ENCODE measurements at regions of chr15 and their contacts with region 1.

Region 1: DNA sequence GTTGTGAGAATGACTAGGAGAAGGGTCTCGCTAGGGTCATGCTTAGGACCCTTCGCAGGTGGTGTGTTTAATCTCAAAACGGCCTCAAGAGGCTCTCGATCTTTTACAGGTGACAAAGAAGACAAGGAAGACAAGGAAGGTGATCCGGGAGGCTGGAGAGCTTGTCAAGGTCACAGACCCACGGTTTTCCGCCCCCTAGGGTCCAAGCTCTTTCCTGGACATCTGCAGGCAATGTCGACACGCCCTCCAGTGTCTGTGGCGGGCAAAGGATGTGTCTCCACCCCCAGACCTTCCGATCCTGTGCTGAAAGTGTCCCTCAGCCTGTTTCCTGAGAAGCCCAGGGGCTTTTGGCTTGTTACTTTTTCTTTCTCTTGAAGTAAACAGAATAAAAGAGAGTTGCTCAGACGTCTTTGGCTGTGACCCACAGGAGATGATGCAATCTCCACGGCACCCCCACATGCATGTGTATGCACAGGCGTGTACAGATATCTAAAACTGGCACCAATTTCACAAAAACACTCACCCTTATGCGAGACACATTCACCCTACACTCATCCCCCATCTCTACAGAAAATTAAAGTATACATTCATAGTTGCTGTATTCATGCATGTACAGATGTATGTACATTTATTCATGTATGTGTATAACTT is 108.8 kb downstream of the KLF13 start:
- DNase-seq: peak; percentile 75
- ATAC-seq: peak; percentile 90
- H3K4me3 ChIP-seq: peak overlapping the region in 1 of 3 experiments; percentile 20; a peak in 1 of 6 replicates
- H3K27ac ChIP-seq: no peak overlapping the region
- H3K4me1 ChIP-seq: peaks cover 12% of the 10 kb centered on the region
- H3K27me3 ChIP-seq: peaks cover 0 to 8% of the 10 kb centered on the region in 2 experiments; a peak in 2 of 5 replicates
- CTCF ChIP-seq: peak; percentile 96
- EP300 ChIP-seq: no peak
- POLR2A ChIP-seq: no peak
- RAD21 ChIP-seq: peak; percentile 86

Region 2: GRCh38 chr15:30791239-30792175 is 643.9 kb before region 1 on chr15:
- CTCF ChIA-PET with region 1: no interaction called
- POLR2A ChIA-PET with region 1: no interaction called
- in situ Hi-C with region 1: loop called (anchors 25 kb)
- intact Hi-C with region 1: no loop called
- DNase-seq: no peak
- ATAC-seq: no peak
- H3K4me3 ChIP-seq: no peak overlapping the region
- H3K27ac ChIP-seq: no peak overlapping the region
- H3K4me1 ChIP-seq: no peaks in the 10 kb centered on the region
- H3K27me3 ChIP-seq: no peaks in the 10 kb centered on the region
- CTCF ChIP-seq: no peak
- EP300 ChIP-seq: no peak
- POLR2A ChIP-seq: no peak
- RAD21 ChIP-seq: no peak

Region 3: GRCh38 chr15:31200735-31201151 is 234.6 kb before region 1 on chr15:
- CTCF ChIA-PET with region 1: interaction called, 13 read pairs
- POLR2A ChIA-PET with region 1: interaction called, 4 read pairs
- in situ Hi-C with region 1: loop called (anchors 5 kb)
- intact Hi-C with region 1: loop called (anchors 1 kb)
- DNase-seq: peak; percentile 46
- ATAC-seq: peak; percentile 83
- H3K4me3 ChIP-seq: no peak overlapping the region
- H3K27ac ChIP-seq: no peak overlapping the region
- H3K4me1 ChIP-seq: peaks cover 20% of the 10 kb centered on the region; the same call in 1 of the 2 replicates
- H3K27me3 ChIP-seq: peaks cover 1 to 20% of the 10 kb centered on the region in 2 experiments; a peak in 3 of 5 replicates
- CTCF ChIP-seq: peak; percentile 93
- EP300 ChIP-seq: no peak
- POLR2A ChIP-seq: no peak
- RAD21 ChIP-seq: peak; percentile 72

Region 4: GRCh38 chr15:31326156-31326732 is 109.1 kb before region 1 on chr15:
- CTCF ChIA-PET with region 1: no interaction called
- POLR2A ChIA-PET with region 1: interaction called, 3 read pairs
- in situ Hi-C with region 1: no loop called
- intact Hi-C with region 1: loop called (anchors 10 kb)
- DNase-seq: peak; percentile 89
- ATAC-seq: peak; percentile 83
- H3K4me3 ChIP-seq: peak overlapping the region; percentile 79 to 90 (median 89)
- H3K27ac ChIP-seq: peak overlapping the region; percentile 82
- H3K4me1 ChIP-seq: peaks cover 47% of the 10 kb centered on the region
- H3K27me3 ChIP-seq: peaks cover 0 to 3% of the 10 kb centered on the region in 2 experiments; a peak in 1 of 5 replicates
- CTCF ChIP-seq: no peak; the same call in 1 of the 2 replicates
- EP300 ChIP-seq: no peak
- POLR2A ChIP-seq: 0 out of 4 replicates have a peak, but pooled peaks of 1 of the 2 experiments have one; percentile 35
- RAD21 ChIP-seq: peak; percentile 41; the same call in 1 of the 2 replicates

Region 5: GRCh38 chr15:31488426-31489204 is 53.2 kb after region 1 on chr15:
- CTCF ChIA-PET with region 1: interaction called, 18 read pairs
- POLR2A ChIA-PET with region 1: no interaction called
- in situ Hi-C with region 1: loop called (anchors 5 kb)
- intact Hi-C with region 1: loop called (anchors 1 kb)
- DNase-seq: peak; percentile 64
- ATAC-seq: peak; percentile 86
- H3K4me3 ChIP-seq: no peak overlapping the region
- H3K27ac ChIP-seq: no peak overlapping the region
- H3K4me1 ChIP-seq: no peaks in the 10 kb centered on the region
- H3K27me3 ChIP-seq: no peaks in the 10 kb centered on the region; a peak in 2 of 5 replicates
- CTCF ChIP-seq: peak; percentile 70
- EP300 ChIP-seq: no peak
- POLR2A ChIP-seq: no peak
- RAD21 ChIP-seq: peak; percentile 52; the same call in 1 of the 2 replicates